Activated CD4-positive, alpha-beta T cell treated with anti-CD3 and anti-CD28 coated beads, Interleukin-2, amount 10 ng/mL, durations not matched to agents 24 days and 14 days (primary cell): ENCODE measurements at regions of chr22 and their contacts with region 1.

Region 1: GRCh38 chr22:30289134-30289979 is at the start of gene CASTOR1:
- DNase-seq: peak; percentile 98
- H3K4me3 Mint-ChIP-seq: peak within 1 kb of the TSS; percentile 86
- H3K27ac Mint-ChIP-seq: peak within 1 kb of the TSS; percentile 83
- H3K4me1 Mint-ChIP-seq: peaks cover 47% of the 10 kb centered on the region
- H3K27me3 Mint-ChIP-seq: no peaks in the 10 kb centered on the region
- total RNA-seq, gene CASTOR1: 4.7 and 7.3 TPM in 2 replicates

Region 2: GRCh38 chr22:30241576-30242371 is 47.6 kb before region 1 on chr22:
- intact Hi-C with region 1: no loop called
- DNase-seq: no peak
- H3K4me3 Mint-ChIP-seq: peak overlapping the region; percentile 97
- H3K27ac Mint-ChIP-seq: peak overlapping the region; percentile 84
- H3K4me1 Mint-ChIP-seq: peaks cover 58% of the 10 kb centered on the region
- H3K27me3 Mint-ChIP-seq: no peaks in the 10 kb centered on the region

Region 3: GRCh38 chr22:30253205-30253852 is 36.0 kb before region 1 on chr22:
- intact Hi-C with region 1: loop called (anchors 1 kb)
- DNase-seq: no peak
- H3K4me3 Mint-ChIP-seq: peak overlapping the region; percentile 9
- H3K27ac Mint-ChIP-seq: peak overlapping the region; percentile 69
- H3K4me1 Mint-ChIP-seq: peaks cover 50% of the 10 kb centered on the region
- H3K27me3 Mint-ChIP-seq: no peaks in the 10 kb centered on the region

Region 4: GRCh38 chr22:30305519-30305905 is 16.2 kb after region 1 on chr22:
- intact Hi-C with region 1: loop called (anchors 1 kb)
- DNase-seq: peak; percentile 92
- H3K4me3 Mint-ChIP-seq: peak overlapping the region; percentile 73
- H3K27ac Mint-ChIP-seq: peak overlapping the region; percentile 91
- H3K4me1 Mint-ChIP-seq: peaks cover 91% of the 10 kb centered on the region
- H3K27me3 Mint-ChIP-seq: no peaks in the 10 kb centered on the region

Region 5: DNA sequence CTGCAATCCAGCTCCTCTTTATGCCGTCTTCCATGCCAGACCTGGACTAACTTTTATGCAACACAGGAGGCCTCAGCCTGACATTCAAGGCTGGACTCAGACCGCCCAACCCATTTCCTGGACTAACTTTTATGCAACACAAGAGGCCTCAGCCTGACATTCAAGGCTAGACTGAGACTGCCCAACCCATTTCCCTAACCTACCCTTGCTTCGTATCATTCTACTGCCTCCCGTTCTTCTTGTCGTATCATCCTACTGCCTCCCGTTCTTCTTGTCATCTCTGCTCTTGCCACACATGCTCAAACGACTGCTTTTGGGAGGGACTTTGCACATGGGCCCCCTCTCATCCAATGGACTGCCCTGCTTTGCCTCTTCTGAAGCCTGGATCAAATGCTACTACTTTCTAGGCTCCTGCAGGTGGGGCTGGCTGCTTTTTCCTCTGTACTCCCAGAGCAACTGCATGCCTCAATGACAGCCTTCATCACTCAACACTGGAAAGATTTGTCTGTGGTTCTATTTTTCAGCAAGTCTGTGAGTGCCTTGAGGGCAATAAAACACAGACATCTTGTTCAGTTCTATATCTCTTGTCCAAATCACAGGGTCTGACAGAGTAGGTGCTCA is 29.6 kb after region 1 on chr22:
- intact Hi-C with region 1: no loop called
- DNase-seq: no peak
- H3K4me3 Mint-ChIP-seq: no peak overlapping the region
- H3K27ac Mint-ChIP-seq: peak overlapping the region; percentile 26
- H3K4me1 Mint-ChIP-seq: peaks cover 77% of the 10 kb centered on the region
- H3K27me3 Mint-ChIP-seq: no peaks in the 10 kb centered on the region

Region 6: DNA sequence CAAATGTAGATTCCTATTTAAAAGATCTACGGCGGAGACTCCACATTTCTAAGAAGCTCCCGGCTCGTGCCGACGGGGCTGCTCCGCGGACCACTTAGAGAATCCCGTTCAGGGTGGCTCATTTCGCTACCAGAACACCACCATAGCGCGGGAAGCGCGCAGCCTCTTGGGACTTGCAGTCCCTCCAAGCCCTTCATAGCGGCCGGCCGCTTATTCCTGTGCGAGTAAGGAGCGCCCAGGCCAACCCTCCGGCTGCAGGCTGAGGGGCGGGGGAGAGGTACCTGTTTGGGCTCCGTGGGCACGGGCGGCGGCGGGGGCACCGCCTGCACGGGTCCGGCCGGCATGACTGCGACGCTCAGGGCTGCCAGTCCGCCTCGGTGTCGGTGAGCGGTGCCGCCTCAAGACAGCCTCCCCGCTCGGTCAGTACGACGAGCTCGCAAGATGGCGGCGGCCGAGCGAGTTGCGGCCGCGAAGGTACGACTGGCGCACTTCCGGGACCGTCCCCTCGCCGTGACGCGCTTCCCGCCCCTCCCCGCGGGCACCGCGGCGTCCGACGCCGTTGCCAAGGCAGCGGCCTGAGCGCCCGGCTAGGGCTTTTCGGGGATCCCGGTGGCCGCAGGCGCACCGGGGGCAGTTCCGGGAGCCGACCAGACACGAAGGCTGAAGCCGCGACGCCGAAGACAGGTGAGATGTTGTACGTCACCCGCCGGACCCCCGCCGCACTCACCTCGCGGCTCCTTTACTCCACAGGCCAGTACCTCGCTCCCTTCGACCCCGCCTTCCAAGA is 67.3 kb after region 1 on chr22 and contains the starts of genes CCDC157 and SF3A1:
- intact Hi-C with region 1: loop called (anchors 1 kb)
- DNase-seq: peak; percentile 98
- H3K4me3 Mint-ChIP-seq: peak within 1 kb of the TSS; percentile 95
- H3K27ac Mint-ChIP-seq: peak within 1 kb of the TSS; percentile 92
- H3K4me1 Mint-ChIP-seq: peaks cover 31% of the 10 kb centered on the region
- H3K27me3 Mint-ChIP-seq: peaks cover 2% of the 10 kb centered on the region
- total RNA-seq, gene CCDC157: 2.9 and 3.2 TPM in 2 replicates
- total RNA-seq, gene SF3A1: 314 and 319 TPM in 2 replicates

Region 7: DNA sequence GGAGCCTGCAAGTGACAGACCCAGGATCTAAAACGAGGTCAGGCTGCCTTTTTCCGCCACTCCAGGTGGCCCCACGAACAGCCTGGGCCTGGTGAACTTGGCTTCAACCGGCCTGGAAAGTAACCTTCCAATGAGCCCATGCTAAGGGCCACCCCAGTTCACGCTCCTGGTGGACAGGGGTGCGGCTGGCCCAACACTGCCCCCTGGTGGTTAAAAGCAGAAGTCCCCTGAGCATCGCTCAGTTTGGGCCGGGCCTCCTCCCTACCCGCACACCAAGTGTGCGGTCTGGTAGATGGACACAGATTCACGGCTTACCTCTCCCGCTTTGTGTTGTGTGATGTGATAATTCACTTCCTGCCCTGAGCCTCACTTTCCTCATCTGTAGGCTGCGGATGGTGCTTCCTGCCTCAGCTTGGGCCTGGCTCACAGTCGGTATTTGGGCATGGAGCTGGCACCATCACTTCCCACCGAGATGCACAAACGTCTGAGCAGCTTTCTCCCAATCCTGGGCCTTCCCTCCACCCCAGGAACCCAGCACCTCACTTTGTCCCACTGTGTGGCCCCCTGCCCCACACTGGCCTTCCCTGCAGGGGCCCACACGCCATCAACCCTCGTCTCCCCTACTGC is 196.1 kb after region 1 on chr22:
- intact Hi-C with region 1: loop called (anchors 1 kb)
- DNase-seq: peak; percentile 94
- H3K4me3 Mint-ChIP-seq: no peak overlapping the region
- H3K27ac Mint-ChIP-seq: no peak overlapping the region
- H3K4me1 Mint-ChIP-seq: no peaks in the 10 kb centered on the region
- H3K27me3 Mint-ChIP-seq: peaks cover 3% of the 10 kb centered on the region